A549 (cell line): ENCODE measurements at regions of chr16 and their contacts with region 1.

Region 1: DNA sequence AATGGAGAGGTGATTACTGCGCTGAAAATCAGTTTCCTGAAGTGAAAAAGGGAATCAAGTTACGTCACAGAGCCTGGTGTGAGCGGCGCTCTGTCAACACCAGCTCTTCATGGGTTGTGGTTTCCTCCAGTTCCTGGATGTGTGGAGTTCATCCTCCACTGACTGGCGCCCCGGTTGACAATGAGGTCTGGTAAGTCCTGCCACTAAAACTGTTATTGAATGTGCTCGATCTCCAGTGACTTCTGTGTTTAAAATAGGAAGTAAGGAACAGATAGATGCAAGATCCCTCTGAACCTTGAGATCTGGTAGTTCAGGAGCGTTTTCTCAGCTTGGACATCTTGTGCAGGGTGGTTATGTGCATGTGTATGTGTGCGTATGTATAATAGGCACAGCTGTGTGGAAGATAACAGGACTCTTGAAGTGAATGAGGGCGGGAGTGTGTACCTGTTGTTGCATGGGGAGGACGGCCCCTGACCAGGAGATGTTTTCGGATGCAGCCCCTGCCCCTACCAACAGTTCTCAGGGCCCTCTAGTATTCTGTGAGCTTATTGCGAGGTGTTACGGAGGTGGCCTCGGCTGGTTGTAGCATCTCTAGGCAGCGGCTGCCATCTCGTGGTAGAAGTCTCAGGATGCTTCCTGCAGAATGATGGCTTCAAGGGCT is 22.0 kb upstream of the GOT2 start:
- DNase-seq: peak; percentile 70 to 81
- ATAC-seq: peak; percentile 98
- H3K4me3 ChIP-seq: no peak overlapping the region
- H3K27ac ChIP-seq: no peak overlapping the region
- H3K4me1 ChIP-seq: no peaks in the 10 kb centered on the region
- CTCF ChIP-seq: peak; percentile 83
- EP300 ChIP-seq: no peak
- POLR2A ChIP-seq: no peak
- RAD21 ChIP-seq: peak; percentile 89 to 94

Region 2: DNA sequence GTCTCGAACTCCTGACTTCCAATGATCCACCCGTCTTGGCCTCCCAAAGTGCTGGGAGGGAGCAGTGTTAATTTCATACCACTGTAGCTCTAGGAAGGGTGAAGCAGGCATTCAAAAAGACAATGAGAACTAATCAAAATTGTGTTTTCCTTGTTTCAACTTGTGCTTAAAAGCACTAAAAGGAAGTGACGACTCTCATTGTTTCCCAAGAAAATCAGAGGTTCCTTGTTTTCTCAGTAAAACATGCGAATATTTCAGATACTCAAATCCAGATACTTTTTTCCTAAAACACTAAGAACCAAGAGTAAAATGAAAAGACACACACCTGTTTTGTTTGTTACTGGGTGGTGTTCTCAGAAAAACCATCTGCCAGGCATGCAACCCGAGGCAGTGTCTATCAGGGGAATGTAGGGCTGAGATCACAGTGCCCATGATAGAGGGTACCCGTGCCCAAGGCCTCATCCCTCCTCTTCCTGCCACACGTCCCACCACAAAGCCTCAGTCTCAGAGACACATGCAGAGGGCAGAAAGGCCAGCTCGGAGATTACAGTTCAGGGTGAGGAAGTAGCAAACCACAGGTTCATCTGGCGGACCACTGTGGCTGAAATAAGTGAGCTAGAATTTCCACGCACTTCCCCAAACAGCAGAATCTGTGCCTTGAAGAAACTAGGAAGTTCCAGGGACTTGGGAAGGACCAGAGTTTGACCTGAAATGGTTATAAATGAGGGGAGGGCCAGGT is 330.2 kb before region 1 on chr16:
- CTCF ChIA-PET with region 1: no interaction called
- POLR2A ChIA-PET with region 1: no interaction called
- DNase-seq: no peak
- ATAC-seq: no peak
- H3K4me3 ChIP-seq: no peak overlapping the region
- H3K27ac ChIP-seq: no peak overlapping the region
- H3K4me1 ChIP-seq: no peaks in the 10 kb centered on the region
- CTCF ChIP-seq: no peak
- EP300 ChIP-seq: no peak
- POLR2A ChIP-seq: no peak
- RAD21 ChIP-seq: no peak

Region 3: GRCh38 chr16:58515125-58515870 is 240.8 kb before region 1 on chr16 and contains the start of gene SETD6:
- CTCF ChIA-PET with region 1: interaction called, 12 read pairs
- POLR2A ChIA-PET with region 1: no interaction called
- DNase-seq: peak; percentile 57 to 86
- ATAC-seq: peak; percentile 73 to 86
- H3K4me3 ChIP-seq: peak within 1 kb of the TSS; percentile 85
- H3K27ac ChIP-seq: peak within 1 kb of the TSS; percentile 87 to 94
- H3K4me1 ChIP-seq: peaks cover 13% of the 10 kb centered on the region; the same call in 2 of the 3 replicates
- CTCF ChIP-seq: no peak
- EP300 ChIP-seq: no peak
- POLR2A ChIP-seq: peak; percentile 67
- RAD21 ChIP-seq: no peak
- polyA plus RNA-seq, gene SETD6: 16.5 and 19.2 TPM in 2 replicates

Region 4: DNA sequence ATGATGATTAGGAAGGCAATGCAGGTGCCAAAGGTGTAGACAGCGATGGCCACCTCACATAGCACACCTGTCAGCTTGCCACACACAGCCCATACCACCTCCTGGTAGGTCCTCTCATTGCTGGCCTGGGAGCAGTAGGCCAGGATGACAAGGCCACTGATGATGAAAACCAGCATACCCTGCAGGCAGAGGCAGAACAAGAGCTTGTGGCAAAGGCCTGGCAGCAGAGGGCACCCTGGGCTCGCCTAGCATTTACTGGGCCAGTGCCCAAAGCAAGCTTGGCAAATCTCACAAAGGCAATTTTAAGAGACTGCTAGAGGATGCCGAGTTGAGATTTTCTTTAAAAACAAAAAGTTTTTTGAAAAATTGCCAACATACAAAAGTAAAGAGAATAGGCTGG is 77.4 kb before region 1 on chr16:
- CTCF ChIA-PET with region 1: interaction called, 45 read pairs
- POLR2A ChIA-PET with region 1: interaction called, 6 read pairs
- DNase-seq: peak in 1 of 2 experiments; percentile 55
- ATAC-seq: peak; percentile 66 to 83; a peak in 5 of 6 replicates
- H3K4me3 ChIP-seq: no peak overlapping the region
- H3K27ac ChIP-seq: no peak overlapping the region
- H3K4me1 ChIP-seq: peaks cover 4% of the 10 kb centered on the region; the same call in 1 of the 3 replicates
- CTCF ChIP-seq: peak; percentile 30; the same call in 2 of the 3 replicates
- EP300 ChIP-seq: no peak
- POLR2A ChIP-seq: no peak
- RAD21 ChIP-seq: peak; percentile 38 to 55; a peak in 4 of 5 replicates

Region 5: DNA sequence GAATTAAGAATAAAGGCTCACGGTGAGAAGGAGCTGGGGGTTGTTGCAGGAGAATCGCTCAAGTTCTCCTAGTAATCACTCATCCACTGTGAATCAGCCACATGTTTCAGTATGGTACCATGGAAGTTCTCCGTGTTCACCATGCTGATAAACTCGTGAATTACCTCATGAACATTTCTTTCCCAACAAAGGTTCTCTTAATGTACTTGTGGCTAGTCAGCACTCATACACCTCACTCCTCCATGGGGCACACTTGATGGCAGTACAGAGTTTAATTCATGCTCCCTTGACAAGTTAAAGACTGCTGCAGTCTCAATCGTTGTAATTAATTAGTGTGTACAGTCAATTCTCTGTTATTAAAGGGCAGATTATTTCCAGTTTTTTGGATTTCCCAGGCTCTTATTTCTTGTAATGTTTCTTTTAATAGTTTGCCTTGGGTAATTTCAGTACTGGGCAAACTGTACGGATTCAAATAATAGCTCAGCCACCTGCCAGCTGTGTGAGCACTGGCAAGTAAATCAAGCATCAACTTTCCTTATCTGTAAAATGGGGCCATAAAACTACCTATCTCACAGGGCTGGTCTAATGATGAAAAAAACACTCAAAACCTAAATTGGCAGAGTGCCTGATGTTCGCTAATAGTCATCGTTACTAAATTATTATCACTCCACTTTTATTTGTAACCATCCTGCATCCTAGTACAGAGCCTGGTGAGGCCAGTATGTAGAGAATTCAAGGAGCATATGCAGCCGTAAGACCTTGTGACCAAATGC is 28.1 kb before region 1 on chr16:
- CTCF ChIA-PET with region 1: interaction called, 30 read pairs
- POLR2A ChIA-PET with region 1: no interaction called
- DNase-seq: no peak
- ATAC-seq: no peak
- H3K4me3 ChIP-seq: no peak overlapping the region
- H3K27ac ChIP-seq: no peak overlapping the region
- H3K4me1 ChIP-seq: peaks cover 9% of the 10 kb centered on the region; the same call in 2 of the 3 replicates
- CTCF ChIP-seq: no peak
- EP300 ChIP-seq: no peak
- POLR2A ChIP-seq: no peak
- RAD21 ChIP-seq: no peak

Region 6: GRCh38 chr16:58741166-58741565 is 15.0 kb before region 1 on chr16:
- CTCF ChIA-PET with region 1: interaction called, 19 read pairs
- POLR2A ChIA-PET with region 1: no interaction called
- DNase-seq: no peak
- ATAC-seq: no peak
- H3K4me3 ChIP-seq: no peak overlapping the region
- H3K27ac ChIP-seq: no peak overlapping the region
- H3K4me1 ChIP-seq: no peaks in the 10 kb centered on the region
- CTCF ChIP-seq: no peak
- EP300 ChIP-seq: no peak
- POLR2A ChIP-seq: no peak
- RAD21 ChIP-seq: no peak

Region 7: GRCh38 chr16:58767581-58767980 is 11.5 kb after region 1 on chr16:
- CTCF ChIA-PET with region 1: interaction called, 10 read pairs
- POLR2A ChIA-PET with region 1: no interaction called
- DNase-seq: no peak
- ATAC-seq: no peak
- H3K4me3 ChIP-seq: no peak overlapping the region
- H3K27ac ChIP-seq: no peak overlapping the region
- H3K4me1 ChIP-seq: no peaks in the 10 kb centered on the region
- CTCF ChIP-seq: no peak
- EP300 ChIP-seq: no peak
- POLR2A ChIP-seq: no peak
- RAD21 ChIP-seq: no peak